ENCODE measurements at regions of chr12 and their contacts with region 1.

Region 1: DNA sequence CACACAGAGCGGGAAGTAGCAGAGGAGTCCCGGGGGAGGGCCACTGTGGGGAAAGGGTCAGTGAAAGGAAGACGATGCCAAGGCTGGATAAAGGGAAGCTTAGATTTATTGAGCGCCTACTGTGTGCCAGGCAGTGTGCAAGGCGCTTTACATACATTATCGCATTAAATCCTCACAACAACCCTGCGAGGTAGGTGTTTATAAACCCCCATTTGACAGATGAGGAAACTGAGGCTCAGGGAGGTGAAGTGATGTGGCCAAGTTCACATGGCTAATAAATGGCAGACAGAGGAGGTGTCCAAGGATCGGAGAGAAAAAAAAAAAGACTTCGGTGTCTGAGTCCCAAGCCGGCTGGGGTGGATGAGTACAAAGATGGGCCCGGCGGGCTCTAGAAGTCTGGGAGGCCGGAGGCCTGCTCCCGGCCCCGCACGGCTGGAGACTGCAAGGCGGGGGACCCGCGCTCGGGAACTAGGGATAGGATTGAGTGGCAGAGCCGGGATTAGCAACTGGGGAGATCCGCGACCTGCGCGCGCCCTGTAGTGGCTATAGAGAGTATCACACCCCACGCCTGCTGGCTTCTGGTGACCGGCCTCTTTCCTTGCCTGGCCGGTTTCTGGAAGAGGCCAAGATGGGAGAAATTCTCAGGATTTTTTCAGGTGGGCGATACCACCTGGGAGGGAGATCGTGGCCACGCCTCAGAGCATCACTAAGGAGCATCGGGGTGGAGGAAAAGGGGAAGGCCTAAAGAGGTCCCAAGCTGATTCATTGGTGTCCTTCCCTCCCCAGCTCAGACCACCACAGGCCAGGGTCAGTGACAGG is 3.9 kb downstream of the DDN start:
- DNase-seq: peak in 7 of 14 experiments; percentile 40 to 73 (median 56)
- ATAC-seq: peak; percentile 28
- H3K4me3 ChIP-seq: no peak overlapping the region
- H3K4me3 Mint-ChIP-seq: peak overlapping the region; percentile 61
- H3K27ac ChIP-seq: no peak overlapping the region
- H3K27ac Mint-ChIP-seq: no peak overlapping the region
- H3K4me1 ChIP-seq: peaks cover 46% of the 10 kb centered on the region
- H3K4me1 Mint-ChIP-seq: peaks cover 44% of the 10 kb centered on the region
- H3K27me3 ChIP-seq: peaks cover 53 to 56% of the 10 kb centered on the region in 2 experiments
- H3K27me3 Mint-ChIP-seq: peaks cover 73% of the 10 kb centered on the region
- CTCF ChIP-seq: peak; percentile 83

Region 2: DNA sequence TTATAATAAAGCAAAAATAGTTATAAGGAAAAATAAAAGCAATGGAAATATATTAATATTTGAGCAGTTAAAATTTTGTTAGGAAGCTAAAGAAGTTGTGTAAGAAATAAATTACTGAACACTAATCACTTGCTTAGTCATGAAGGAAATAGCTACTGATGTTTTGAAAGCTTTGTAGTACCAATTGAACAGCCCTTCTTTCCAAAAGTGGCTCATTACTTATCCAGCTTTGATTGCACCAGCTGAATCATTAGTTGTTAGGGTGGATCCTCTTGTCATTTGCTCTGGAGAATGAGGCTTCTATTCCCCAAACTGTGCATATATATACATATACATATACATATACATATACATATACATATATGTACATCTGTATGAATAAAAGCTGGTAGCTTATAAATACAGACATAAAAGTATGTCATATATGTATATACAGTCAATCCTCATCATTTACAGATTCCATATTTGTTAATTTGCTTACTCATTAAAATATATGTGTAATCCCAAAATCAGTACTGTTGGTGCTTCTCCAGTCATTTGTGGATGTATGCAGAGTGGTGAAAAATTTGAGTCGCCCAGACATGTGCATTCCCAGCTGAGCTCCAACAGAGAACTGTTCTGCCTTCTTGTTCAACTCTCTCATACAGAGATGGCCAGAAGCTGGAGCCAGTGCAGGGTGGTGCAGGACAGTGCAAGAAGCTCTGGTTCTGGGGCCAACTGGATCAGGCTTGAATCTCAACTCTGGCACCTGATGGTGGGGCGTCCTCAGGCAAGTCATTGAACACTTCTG is 1503.6 kb before region 1 on chr12:
- CTCF ChIA-PET with region 1: no interaction called
- POLR2A ChIA-PET with region 1: no interaction called
- intact Hi-C with region 1: no loop called
- DNase-seq: no peak
- ATAC-seq: no peak
- H3K4me3 ChIP-seq: no peak overlapping the region
- H3K4me3 Mint-ChIP-seq: no peak overlapping the region
- H3K27ac ChIP-seq: no peak overlapping the region
- H3K27ac Mint-ChIP-seq: no peak overlapping the region
- H3K4me1 ChIP-seq: no peaks in the 10 kb centered on the region
- H3K4me1 Mint-ChIP-seq: no peaks in the 10 kb centered on the region
- H3K27me3 ChIP-seq: no peaks in the 10 kb centered on the region
- H3K27me3 Mint-ChIP-seq: no peaks in the 10 kb centered on the region
- CTCF ChIP-seq: no peak

Region 3: GRCh38 chr12:48903982-48904411 is 91.3 kb before region 1 on chr12:
- CTCF ChIA-PET with region 1: interaction called, 3 read pairs
- POLR2A ChIA-PET with region 1: no interaction called
- intact Hi-C with region 1: loop called in 1 of 2 experiments (anchors 5 kb)
- DNase-seq: peak; percentile 73 to 93 (median 82)
- ATAC-seq: peak; percentile 100
- H3K4me3 ChIP-seq: peak overlapping the region; percentile 37
- H3K4me3 Mint-ChIP-seq: peak overlapping the region; percentile 54
- H3K27ac ChIP-seq: no peak overlapping the region
- H3K27ac Mint-ChIP-seq: no peak overlapping the region
- H3K4me1 ChIP-seq: peaks cover 13% of the 10 kb centered on the region
- H3K4me1 Mint-ChIP-seq: peaks cover 4% of the 10 kb centered on the region
- H3K27me3 ChIP-seq: no peaks in the 10 kb centered on the region
- H3K27me3 Mint-ChIP-seq: peaks cover 5% of the 10 kb centered on the region
- CTCF ChIP-seq: peak; percentile 80

Region 4: DNA sequence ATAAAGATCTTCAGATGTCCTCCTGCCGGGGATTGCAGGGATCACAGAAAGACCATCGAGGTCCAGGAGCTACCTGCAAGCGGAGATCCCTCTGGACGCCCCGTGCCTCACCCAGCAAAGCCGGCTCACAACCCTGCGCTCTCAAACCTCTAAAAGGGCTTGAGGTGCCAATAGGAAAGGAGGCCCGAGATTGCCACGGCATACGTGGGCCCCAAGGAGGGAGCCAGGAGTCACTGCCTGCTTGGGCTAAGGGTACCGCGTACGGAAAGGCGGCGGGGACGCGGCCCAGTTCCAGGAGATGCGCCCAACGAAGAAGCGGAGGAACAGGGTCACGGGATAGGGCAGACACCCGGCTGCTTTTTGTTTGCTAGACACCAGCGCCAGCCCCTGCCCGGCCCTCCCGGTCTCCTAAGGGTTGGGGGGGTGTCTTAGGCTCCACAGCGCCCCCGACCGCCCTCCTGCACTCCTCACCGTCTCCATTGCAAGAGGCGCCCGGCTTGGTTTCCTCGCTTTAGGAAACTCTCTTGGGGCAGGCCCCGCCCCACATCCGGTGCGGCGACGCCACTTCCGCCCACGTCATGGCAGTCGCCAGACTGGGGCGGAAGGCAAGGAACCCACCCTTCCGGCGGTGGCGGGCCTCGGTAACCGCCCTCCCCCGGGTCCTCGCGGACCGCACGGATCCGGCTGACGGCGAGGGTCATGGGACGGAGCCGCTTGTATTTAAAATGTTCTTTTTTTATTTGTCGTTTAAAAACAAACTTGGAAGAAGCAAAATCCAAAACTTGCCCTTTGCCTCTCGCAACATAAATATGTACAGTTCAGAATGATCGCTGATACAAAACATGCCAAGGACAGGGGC is 23.2 kb after region 1 on chr12 and contains the start of gene PRKAG1:
- CTCF ChIA-PET with region 1: interaction called, 39 read pairs
- POLR2A ChIA-PET with region 1: interaction called, 10 read pairs
- intact Hi-C with region 1: loop called (anchors 1 to 2 kb)
- DNase-seq: peak; percentile 94 to 99 (median 96)
- ATAC-seq: peak; percentile 90
- H3K4me3 ChIP-seq: peak within 1 kb of the TSS; percentile 73
- H3K4me3 Mint-ChIP-seq: peak within 1 kb of the TSS; percentile 97
- H3K27ac ChIP-seq: peak within 1 kb of the TSS; percentile 94 to 97
- H3K27ac Mint-ChIP-seq: peak within 1 kb of the TSS; percentile 99
- H3K4me1 ChIP-seq: peaks cover 27% of the 10 kb centered on the region
- H3K4me1 Mint-ChIP-seq: peaks cover 50% of the 10 kb centered on the region
- H3K27me3 ChIP-seq: no peaks in the 10 kb centered on the region
- H3K27me3 Mint-ChIP-seq: no peaks in the 10 kb centered on the region
- CTCF ChIP-seq: peak; percentile 60
- total RNA-seq, gene PRKAG1: 34.6 to 38.2 TPM

Region 5: DNA sequence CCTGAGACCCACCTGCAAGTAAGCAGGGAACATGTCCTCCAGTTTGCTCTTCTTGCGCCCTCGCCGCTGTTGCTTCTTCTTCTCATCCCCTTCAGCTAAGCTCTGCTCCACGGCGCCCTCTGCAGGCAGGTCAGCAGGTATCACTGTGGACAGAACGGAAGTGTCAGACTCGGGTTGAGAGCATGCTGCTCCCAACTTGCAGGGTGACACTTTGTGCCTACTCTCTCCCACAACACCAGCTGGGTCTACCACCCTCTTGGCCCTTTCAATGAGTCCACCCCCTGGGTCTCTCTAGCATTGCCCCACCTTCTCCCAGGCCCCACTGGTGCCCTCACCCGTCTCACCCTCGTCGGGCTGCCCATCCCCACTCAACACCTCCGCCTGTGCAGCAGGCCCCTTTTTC is 48.6 kb after region 1 on chr12:
- CTCF ChIA-PET with region 1: interaction called, 26 read pairs
- POLR2A ChIA-PET with region 1: no interaction called
- intact Hi-C with region 1: loop called in 1 of 2 experiments (anchors 2 kb)
- DNase-seq: peak; percentile 68 to 88 (median 81)
- ATAC-seq: peak; percentile 95
- H3K4me3 ChIP-seq: no peak overlapping the region
- H3K4me3 Mint-ChIP-seq: no peak overlapping the region
- H3K27ac ChIP-seq: no peak overlapping the region
- H3K27ac Mint-ChIP-seq: peak overlapping the region; percentile 52
- H3K4me1 ChIP-seq: peaks cover 11% of the 10 kb centered on the region
- H3K4me1 Mint-ChIP-seq: peaks cover 6% of the 10 kb centered on the region
- H3K27me3 ChIP-seq: no peaks in the 10 kb centered on the region
- H3K27me3 Mint-ChIP-seq: no peaks in the 10 kb centered on the region
- CTCF ChIP-seq: peak; percentile 74

Measured in CD4-positive, alpha-beta T cell (primary cell).